Uterus (tissue), 4 donors: ENCODE measurements at regions of chr16 and their contacts with region 1.

Region 1: DNA sequence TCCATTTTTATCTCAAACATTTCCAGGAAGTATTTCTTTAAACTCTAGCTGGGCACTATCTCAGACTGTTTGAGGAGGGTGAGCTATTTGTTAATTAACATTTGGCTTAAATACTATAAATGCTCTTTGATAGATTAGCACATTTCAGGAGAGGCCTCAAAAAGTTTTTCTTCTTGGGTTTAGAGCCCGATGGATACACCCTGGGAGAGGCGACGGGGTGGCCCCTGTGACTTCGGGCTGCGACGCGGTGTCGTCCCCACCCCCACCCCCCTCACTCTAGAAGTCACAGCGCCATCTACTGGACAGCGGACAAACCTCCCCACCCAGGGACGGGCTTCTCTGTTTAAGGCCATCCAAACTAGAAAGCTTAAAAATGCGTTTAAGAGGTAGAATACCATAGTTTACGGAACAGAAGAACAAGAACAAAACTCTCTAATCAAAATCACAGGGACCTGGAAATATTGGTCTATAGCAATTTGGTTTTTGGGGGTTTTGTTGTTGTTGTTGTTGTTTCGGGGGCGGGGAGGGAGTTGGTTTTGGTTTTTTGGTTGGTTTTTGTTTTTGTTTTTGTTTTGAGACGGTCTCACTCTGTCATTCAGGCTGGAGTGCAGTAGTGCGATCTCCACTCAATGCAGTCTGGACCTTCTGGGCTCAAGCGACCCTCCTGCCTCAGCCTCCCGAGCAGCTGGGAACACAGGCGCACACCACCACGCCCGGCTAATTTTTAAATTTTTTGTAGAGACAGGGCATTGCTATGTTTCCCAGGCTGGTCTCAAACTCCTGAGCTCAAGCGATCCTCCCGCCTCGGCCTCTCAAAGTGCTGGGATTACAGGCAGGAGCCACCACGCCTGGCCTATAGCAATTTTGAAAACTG is 254.4 kb downstream of the C16orf95 start:
- DNase-seq: no peak
- H3K4me3 ChIP-seq: no peak overlapping the region
- H3K27ac ChIP-seq: no peak overlapping the region
- H3K4me1 ChIP-seq: no peaks in the 10 kb centered on the region
- H3K27me3 ChIP-seq: peaks cover 0 to 17% of the 10 kb centered on the region in 2 donors
- CTCF ChIP-seq: peak; percentile 29 to 52 (median 39)
- POLR2A ChIP-seq: no peak

Region 2: DNA sequence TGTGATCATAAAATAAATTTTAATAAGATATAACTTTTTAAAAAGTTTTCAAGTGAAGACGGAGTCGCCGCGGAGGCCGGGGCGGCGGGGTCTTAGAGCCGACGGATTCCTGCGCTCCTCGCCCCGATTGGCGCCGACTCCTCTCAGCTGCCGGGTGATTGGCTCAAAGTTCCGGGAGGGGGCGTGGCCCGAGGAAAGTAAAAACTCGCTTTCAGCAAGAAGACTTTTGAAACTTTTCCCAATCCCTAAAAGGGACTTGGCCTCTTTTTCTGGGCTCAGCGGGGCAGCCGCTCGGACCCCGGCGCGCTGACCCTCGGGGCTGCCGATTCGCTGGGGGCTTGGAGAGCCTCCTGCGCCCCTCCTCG is 496.2 kb before region 1 on chr16 and contains the start of gene FOXC2:
- intact Hi-C with region 1: loop called (anchors 5 kb)
- DNase-seq: peak; percentile 67 to 69
- H3K4me3 ChIP-seq: peak within 1 kb of the TSS in 1 of 2 donors; percentile 8
- H3K27ac ChIP-seq: peak within 1 kb of the TSS in 1 of 2 donors; percentile 31
- H3K4me1 ChIP-seq: no peaks in the 10 kb centered on the region
- H3K27me3 ChIP-seq: peaks cover 16 to 52% of the 10 kb centered on the region in 2 donors
- CTCF ChIP-seq: no peak
- POLR2A ChIP-seq: peak in 1 of 2 donors; percentile 8
- total RNA-seq, gene FOXC2: 0.21 to 2.6 TPM in 2 of 4 donors, not detected in the others

Region 3: GRCh38 chr16:86697715-86698114 is 365.1 kb before region 1 on chr16:
- intact Hi-C with region 1: no loop called
- DNase-seq: no peak
- H3K4me3 ChIP-seq: no peak overlapping the region
- H3K27ac ChIP-seq: no peak overlapping the region
- H3K4me1 ChIP-seq: no peaks in the 10 kb centered on the region
- H3K27me3 ChIP-seq: peaks cover 0 to 7% of the 10 kb centered on the region in 2 donors
- CTCF ChIP-seq: no peak
- POLR2A ChIP-seq: no peak